ENCODE measurements at regions of chr16 and their contacts with region 1.

Region 1: DNA sequence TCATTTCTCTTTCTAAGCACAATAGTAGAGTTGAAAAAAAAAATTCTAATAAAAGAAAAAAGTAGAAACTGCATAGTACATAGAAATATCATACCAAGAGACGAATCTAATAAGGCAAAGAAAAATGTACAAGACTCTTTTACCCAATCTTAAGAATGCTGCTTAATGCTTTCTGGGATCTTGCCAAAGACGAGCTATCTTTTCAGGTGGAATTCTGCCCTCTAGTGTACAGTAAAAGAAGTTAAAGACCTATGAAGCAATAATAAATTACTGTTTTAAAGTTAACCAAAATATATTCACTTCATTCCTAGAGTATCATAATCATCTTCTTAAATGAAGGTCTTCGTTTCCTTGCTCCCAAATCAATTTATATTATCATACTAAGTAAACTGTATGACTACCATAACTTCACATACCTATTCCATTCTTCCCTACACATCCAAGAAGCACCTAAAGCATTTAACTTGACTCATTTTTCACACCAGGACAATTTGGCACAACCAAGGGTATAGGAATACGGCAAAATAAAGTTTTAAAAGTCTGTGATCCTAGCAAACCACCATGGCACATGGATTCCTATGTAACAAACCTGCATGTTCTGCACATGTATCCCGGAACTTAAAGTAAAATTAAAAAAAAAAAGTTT is 47.7 kb downstream of the CFDP1 start:
- DNase-seq: peak in 3 of 42 donors; percentile 12 to 50 (median 24)

Region 2: DNA sequence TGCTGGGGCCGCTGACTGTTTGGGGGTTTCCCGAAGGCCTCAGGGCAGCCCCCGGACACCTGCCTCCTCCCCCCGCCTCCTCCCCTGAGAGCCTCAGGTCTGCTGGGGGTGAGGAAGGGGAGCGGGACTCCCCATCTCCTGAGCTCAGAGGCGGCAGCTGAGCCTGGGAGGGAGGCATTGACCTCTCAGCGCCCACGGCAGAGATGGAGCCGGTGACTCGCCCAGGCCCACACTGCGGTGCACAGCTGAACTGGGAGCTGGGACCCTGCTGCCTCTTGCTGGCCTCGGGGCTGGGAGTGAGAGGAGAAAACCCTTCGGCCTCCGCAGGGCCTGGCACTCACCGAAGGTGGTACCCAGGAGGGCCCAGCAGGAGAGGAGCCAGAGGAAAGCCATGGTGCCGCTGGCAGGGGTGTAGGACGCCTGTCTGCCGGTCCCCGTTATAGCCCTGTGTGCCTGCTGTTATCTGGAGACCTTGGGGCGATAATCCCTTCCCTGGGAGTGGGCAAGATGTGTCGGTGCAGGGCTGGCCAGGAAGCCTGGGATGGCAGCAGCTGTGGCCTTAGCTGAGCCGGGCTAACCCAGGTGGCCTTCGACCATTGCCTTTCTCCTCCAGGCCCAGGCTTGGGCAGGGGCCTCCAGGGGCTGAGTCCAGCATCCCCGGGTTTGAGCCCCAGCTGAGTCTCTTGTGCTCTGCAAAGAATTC is 178.7 kb before region 1 on chr16 and contains the start of gene CTRB2:
- intact Hi-C with region 1: loop called (anchors 10 kb)
- DNase-seq: no peak

Region 3: GRCh38 chr16:75238132-75238852 is 147.3 kb before region 1 on chr16:
- intact Hi-C with region 1: loop called (anchors 5 kb)
- DNase-seq: peak; percentile 74 to 95 (median 86)

Region 4: GRCh38 chr16:75265845-75266701 is 119.6 kb before region 1 on chr16:
- intact Hi-C with region 1: loop called (anchors 10 kb)
- DNase-seq: peak in 38 of 42 donors; percentile 55 to 88 (median 76)

Region 5: DNA sequence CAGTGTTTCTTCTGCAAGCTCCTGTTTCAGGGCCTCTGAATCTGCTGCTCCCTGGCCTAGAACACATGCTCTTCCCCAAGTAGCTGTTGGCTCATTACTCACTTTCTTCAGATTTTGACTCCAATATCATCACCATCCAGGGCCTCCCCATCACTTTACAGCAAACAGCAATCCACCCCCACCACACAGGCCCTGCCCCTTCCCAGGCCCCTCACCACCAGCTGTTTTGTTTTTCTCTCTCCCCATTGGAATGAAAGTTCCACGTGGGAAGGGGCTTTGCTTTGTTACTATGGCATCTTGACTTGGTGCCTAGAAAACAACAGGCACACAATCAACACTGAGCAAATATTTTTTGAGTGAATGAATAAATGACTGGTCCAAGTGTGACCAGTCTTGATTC is 74.8 kb after region 1 on chr16:
- intact Hi-C with region 1: no loop called
- DNase-seq: peak in 2 of 42 donors; percentile 3 to 28

Measured in head of caudate nucleus (tissue), 42 donors.